Activated B cell treated with CpG ODN at 0.5 μM for 24 hours (primary cell): ENCODE measurements at regions of chr3 and their contacts with region 1.

Region 1: GRCh38 chr3:114056130-114057010 is at the starts of genes CCDC191 and QTRT2:
- DNase-seq: peak; percentile 89
- ATAC-seq: peak; percentile 95
- H3K4me3 Mint-ChIP-seq: peak within 1 kb of the TSS; percentile 99
- H3K27ac Mint-ChIP-seq: peak within 1 kb of the TSS; percentile 99
- H3K4me1 Mint-ChIP-seq: peaks cover 55% of the 10 kb centered on the region
- H3K27me3 Mint-ChIP-seq: peaks cover 3% of the 10 kb centered on the region
- CTCF ChIP-seq: no peak
- total RNA-seq, gene CCDC191: 14.7 and 17.2 TPM in 2 replicates
- total RNA-seq, gene QTRT2: 63.1 and 75.5 TPM in 2 replicates

Region 2: DNA sequence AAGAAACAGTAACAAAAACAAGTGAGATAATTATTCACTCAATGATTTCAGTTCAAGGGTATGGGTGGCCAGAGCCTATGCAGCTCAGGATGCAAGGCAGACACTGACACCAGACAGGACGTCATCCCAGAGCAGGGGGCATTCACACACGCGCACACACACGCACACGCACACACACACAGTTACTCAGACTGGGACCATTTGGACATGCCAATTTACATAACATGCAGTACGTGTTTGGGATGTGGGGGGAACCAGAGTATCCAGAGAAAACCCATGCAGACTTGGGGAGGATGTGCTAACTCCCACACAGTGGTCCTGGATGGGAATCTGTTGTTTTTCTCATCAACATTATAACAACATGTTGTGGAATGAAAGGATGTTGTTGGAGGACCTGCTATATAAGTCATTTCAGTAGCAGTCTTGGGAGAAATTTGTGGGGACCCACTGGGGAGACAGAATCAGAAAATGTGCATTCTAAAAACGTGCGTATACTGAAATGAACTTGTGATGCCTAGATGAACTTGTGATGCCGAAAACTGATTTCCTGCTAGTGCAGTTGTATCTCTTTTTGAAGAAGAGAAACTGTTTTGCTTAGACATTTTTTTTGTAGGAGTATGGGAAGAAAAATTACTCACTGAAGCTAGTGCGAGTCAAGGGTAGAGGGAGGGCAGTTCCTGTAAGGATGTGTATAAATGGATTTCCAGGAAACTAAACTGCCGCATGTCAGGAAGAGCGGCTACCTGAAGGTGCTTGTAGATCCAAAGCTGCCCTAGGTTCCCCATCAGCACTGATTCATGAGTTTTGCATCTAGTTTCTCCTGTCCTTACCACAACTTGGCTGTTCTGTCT is 1698.2 kb before region 1 on chr3:
- CTCF ChIA-PET with region 1: no interaction called
- POLR2A ChIA-PET with region 1: no interaction called
- intact Hi-C with region 1: no loop called
- DNase-seq: no peak
- ATAC-seq: peak; percentile 61
- H3K4me3 Mint-ChIP-seq: peak overlapping the region; percentile 58
- H3K27ac Mint-ChIP-seq: peak overlapping the region; percentile 82
- H3K4me1 Mint-ChIP-seq: peaks cover 28% of the 10 kb centered on the region
- H3K27me3 Mint-ChIP-seq: no peaks in the 10 kb centered on the region
- CTCF ChIP-seq: no peak

Region 3: DNA sequence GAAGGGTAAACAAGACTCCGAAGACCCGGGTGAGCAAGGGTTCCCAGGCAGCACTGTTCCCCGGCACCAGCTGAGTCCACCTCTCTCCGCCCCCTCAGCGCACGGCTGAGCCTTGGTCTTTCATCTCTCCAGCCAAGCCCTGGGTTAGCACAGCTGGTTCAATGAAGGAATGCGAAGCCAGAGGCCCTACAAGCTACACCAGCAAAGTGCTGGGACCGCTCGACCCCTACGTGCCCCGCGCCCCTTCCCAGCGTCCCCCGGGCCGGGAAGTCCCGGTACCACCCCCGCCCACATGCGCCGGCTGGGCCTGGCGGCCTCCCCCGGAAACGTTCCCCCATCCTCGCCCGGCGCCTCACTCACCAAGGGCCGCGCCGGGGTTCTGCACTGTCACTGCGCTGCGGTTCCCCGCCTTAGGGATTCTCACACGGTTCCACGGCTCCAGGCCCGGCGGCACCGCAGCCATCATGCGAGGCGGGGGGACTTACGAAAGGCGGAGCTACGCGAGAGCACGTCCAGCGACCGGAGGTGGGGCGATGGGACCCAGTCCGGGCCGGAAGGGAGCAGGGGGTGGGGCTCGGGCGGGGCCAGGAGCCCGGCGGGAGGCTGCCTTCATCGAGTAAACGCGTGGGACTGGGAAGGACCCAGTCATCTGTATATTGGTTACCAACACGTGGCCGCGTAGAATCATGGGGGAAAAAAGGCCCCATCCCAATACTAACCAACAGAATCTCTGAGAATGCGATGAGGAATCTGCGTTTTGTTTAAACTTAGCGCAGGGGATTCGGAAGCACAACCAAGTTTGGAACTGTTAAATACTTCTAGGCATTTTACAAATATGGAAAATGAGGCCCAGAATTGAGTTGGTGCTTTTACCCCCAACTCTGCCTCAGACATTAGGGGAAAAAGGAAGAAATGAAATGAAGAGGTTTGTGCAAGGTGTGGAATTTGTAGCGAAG is 1036.9 kb before region 1 on chr3:
- CTCF ChIA-PET with region 1: no interaction called
- POLR2A ChIA-PET with region 1: no interaction called
- intact Hi-C with region 1: loop called (anchors 2 kb)
- DNase-seq: peak; percentile 81
- ATAC-seq: peak; percentile 87
- H3K4me3 Mint-ChIP-seq: peak overlapping the region; percentile 92
- H3K27ac Mint-ChIP-seq: peak overlapping the region; percentile 95
- H3K4me1 Mint-ChIP-seq: peaks cover 54% of the 10 kb centered on the region
- H3K27me3 Mint-ChIP-seq: no peaks in the 10 kb centered on the region
- CTCF ChIP-seq: no peak

Region 4: DNA sequence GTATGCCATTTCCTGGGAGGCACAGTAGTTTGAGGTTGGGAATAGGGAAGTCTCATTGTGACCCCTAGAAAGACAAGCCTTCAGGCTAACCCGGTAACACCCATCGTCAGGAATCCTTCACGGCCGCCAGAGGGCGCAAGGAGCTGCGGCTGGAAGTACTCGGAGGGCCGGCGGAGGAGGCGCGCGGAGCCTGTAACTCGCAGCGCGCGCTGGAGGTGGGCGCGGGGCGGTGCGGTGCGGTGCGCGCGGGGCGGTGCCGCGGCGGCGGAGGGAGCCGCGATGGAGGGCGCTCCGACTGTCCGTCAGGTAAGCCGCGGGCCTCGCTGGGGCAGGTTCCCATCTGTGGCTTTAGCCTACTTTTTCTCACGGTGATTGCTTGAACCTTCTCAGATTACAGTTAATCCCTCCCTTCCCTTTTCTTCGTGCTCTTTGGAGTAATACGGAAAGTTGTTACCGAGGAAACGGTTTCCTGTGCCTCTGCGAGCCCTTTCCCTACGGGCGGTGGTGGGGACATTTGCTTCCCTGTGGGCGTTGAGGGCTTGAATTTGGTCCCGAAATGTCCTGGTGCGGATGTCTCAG is 217.7 kb before region 1 on chr3 and contains the start of gene GRAMD1C:
- CTCF ChIA-PET with region 1: no interaction called
- POLR2A ChIA-PET with region 1: no interaction called
- intact Hi-C with region 1: loop called (anchors 2 kb)
- DNase-seq: peak; percentile 78
- ATAC-seq: peak; percentile 99
- H3K4me3 Mint-ChIP-seq: peak within 1 kb of the TSS; percentile 90
- H3K27ac Mint-ChIP-seq: peak within 1 kb of the TSS; percentile 59
- H3K4me1 Mint-ChIP-seq: peaks cover 22% of the 10 kb centered on the region
- H3K27me3 Mint-ChIP-seq: no peaks in the 10 kb centered on the region
- CTCF ChIP-seq: peak; percentile 59
- total RNA-seq, gene GRAMD1C: 11.4 and 12.2 TPM in 2 replicates

Region 5: GRCh38 chr3:113985541-113985940 is 70.8 kb before region 1 on chr3:
- CTCF ChIA-PET with region 1: interaction called, 3 read pairs
- POLR2A ChIA-PET with region 1: interaction called, 7 read pairs
- intact Hi-C with region 1: loop called (anchors 2 kb)
- DNase-seq: no peak
- ATAC-seq: peak; percentile 89
- H3K4me3 Mint-ChIP-seq: peak overlapping the region; percentile 56
- H3K27ac Mint-ChIP-seq: peak overlapping the region; percentile 88
- H3K4me1 Mint-ChIP-seq: peaks cover 57% of the 10 kb centered on the region
- H3K27me3 Mint-ChIP-seq: no peaks in the 10 kb centered on the region
- CTCF ChIP-seq: no peak

Region 6: GRCh38 chr3:114011059-114011797 is 45.1 kb before region 1 on chr3:
- CTCF ChIA-PET with region 1: interaction called, 14 read pairs
- POLR2A ChIA-PET with region 1: interaction called, 53 read pairs
- intact Hi-C with region 1: no loop called
- DNase-seq: no peak
- ATAC-seq: peak; percentile 82
- H3K4me3 Mint-ChIP-seq: peak overlapping the region; percentile 81
- H3K27ac Mint-ChIP-seq: peak overlapping the region; percentile 89
- H3K4me1 Mint-ChIP-seq: peaks cover 50% of the 10 kb centered on the region
- H3K27me3 Mint-ChIP-seq: no peaks in the 10 kb centered on the region
- CTCF ChIP-seq: no peak

Region 7: GRCh38 chr3:115147329-115148141 is 1091.2 kb after region 1 on chr3:
- CTCF ChIA-PET with region 1: no interaction called
- POLR2A ChIA-PET with region 1: no interaction called
- intact Hi-C with region 1: loop called (anchors 1 kb)
- DNase-seq: peak; percentile 81
- ATAC-seq: peak; percentile 77
- H3K4me3 Mint-ChIP-seq: peak overlapping the region; percentile 94
- H3K27ac Mint-ChIP-seq: peak overlapping the region; percentile 98
- H3K4me1 Mint-ChIP-seq: peaks cover 34% of the 10 kb centered on the region
- H3K27me3 Mint-ChIP-seq: no peaks in the 10 kb centered on the region
- CTCF ChIP-seq: no peak